ENCODE measurements at regions of chr6 and their contacts with region 1.

Region 1: GRCh38 chr6:42104095-42104806 is 38.2 kb downstream of the C6orf132 start:
- DNase-seq: peak; percentile 87
- H3K4me3 Mint-ChIP-seq: peak overlapping the region; percentile 65
- H3K27ac Mint-ChIP-seq: peak overlapping the region; percentile 56
- H3K4me1 Mint-ChIP-seq: peaks cover 36% of the 10 kb centered on the region
- H3K27me3 Mint-ChIP-seq: peaks cover 6% of the 10 kb centered on the region

Region 2: DNA sequence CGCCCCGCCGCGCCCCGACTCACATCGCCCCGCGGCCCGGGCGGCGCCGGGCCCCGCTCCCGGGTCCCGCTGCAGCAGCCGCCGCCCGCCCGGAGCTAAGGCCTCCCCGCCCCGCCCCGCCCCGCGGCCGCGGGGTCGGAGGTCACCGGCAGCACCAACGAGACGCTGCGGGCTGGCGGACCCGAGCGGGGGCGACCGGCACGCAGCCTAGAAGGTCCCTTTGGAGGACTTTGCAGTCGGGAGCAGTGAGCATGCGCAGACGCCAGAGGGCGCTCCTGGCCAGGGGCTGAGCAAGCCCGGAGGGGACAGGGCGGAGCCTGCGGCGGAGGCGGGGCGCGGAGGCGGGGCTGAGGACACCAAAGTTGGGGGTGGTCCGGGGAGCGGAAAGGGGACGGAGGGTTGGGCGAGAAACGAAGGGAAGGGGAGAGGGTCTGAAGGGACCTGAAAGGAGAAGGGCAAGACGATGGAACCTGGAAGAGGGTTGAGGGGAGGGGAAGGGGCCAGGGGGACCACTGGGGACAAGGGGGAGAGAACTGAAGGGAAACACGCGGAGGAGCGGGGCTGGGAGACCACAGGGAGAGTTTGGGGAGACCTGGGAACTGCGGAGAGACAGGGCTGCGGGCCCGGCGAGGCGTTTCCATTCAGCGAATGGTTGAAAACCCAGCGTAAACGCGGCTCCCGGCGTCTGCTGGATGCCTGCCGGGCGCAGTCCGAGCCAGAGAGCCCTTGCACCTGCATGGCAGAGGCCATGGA is 324.3 kb before region 1 on chr6 and contains the start of gene FRS3:
- CTCF ChIA-PET with region 1: interaction called, 4 read pairs
- POLR2A ChIA-PET with region 1: interaction called, 3 read pairs
- intact Hi-C with region 1: loop called (anchors 1 kb)
- DNase-seq: peak; percentile 99
- H3K4me3 Mint-ChIP-seq: peak within 1 kb of the TSS; percentile 85
- H3K27ac Mint-ChIP-seq: peak within 1 kb of the TSS; percentile 38
- H3K4me1 Mint-ChIP-seq: peaks cover 13% of the 10 kb centered on the region
- H3K27me3 Mint-ChIP-seq: peaks cover 6% of the 10 kb centered on the region
- total RNA-seq, gene FRS3: 4.8 to 5.5 TPM

Region 3: DNA sequence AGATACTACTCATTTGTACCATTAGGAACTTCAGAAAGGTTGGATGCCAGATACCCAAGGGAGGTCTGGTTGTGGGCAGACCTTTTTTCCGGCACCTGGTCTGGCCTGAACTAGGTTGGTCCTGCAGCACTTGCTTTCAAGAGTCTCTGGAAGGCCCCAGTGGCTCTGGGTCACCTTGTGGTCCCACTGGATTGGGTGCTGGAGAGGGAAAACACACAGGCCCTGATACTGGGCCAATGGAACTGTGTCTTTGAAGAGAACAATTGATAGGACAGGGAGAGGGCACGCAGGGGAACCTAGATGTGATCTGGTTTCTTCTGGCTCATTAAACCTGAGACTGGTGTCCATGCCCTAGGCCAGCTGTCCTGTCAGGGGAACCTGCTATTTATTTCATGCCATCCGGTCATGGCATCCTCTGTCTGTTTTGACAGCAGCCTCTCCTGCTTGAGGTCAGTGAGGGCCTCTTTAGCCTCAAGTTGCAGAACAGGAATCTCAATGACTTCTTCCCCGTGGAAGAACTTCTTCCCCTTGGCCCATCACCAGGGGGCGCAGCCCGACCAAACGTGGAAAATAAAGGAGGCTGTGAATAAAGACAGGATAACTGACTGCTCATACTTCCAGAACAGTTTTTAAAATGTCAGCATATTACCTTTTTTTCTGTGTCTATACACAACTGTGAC is 29.0 kb before region 1 on chr6:
- CTCF ChIA-PET with region 1: interaction called, 91 read pairs
- POLR2A ChIA-PET with region 1: no interaction called
- intact Hi-C with region 1: loop called (anchors 1 kb)
- DNase-seq: peak; percentile 84
- H3K4me3 Mint-ChIP-seq: no peak overlapping the region
- H3K27ac Mint-ChIP-seq: no peak overlapping the region
- H3K4me1 Mint-ChIP-seq: peaks cover 14% of the 10 kb centered on the region
- H3K27me3 Mint-ChIP-seq: no peaks in the 10 kb centered on the region

Region 4: GRCh38 chr6:42122718-42123151 is 18.5 kb after region 1 on chr6:
- CTCF ChIA-PET with region 1: interaction called, 12 read pairs
- POLR2A ChIA-PET with region 1: interaction called, 3 read pairs
- intact Hi-C with region 1: no loop called
- DNase-seq: no peak
- H3K4me3 Mint-ChIP-seq: no peak overlapping the region
- H3K27ac Mint-ChIP-seq: no peak overlapping the region
- H3K4me1 Mint-ChIP-seq: no peaks in the 10 kb centered on the region
- H3K27me3 Mint-ChIP-seq: no peaks in the 10 kb centered on the region

Region 5: GRCh38 chr6:42166444-42167141 is 62.3 kb after region 1 on chr6:
- CTCF ChIA-PET with region 1: interaction called, 15 read pairs
- POLR2A ChIA-PET with region 1: no interaction called
- intact Hi-C with region 1: loop called (anchors 2 kb)
- DNase-seq: peak; percentile 87
- H3K4me3 Mint-ChIP-seq: no peak overlapping the region
- H3K27ac Mint-ChIP-seq: no peak overlapping the region
- H3K4me1 Mint-ChIP-seq: no peaks in the 10 kb centered on the region
- H3K27me3 Mint-ChIP-seq: no peaks in the 10 kb centered on the region